ENCODE measurements at regions of chr1 and their contacts with region 1.

Region 1: GRCh38 chr1:88061492-88062177 is 622.4 kb upstream of the PKN2 start:
- DNase-seq: peak; percentile 64 to 80
- H3K4me3 ChIP-seq: no peak overlapping the region
- H3K27ac ChIP-seq: no peak overlapping the region
- H3K4me1 ChIP-seq: peaks cover 0 to 9% (median 4%) of the 10 kb centered on the region in 4 donors
- H3K27me3 ChIP-seq: no peaks in the 10 kb centered on the region
- CTCF ChIP-seq: peak; percentile 86 to 92

Region 2: DNA sequence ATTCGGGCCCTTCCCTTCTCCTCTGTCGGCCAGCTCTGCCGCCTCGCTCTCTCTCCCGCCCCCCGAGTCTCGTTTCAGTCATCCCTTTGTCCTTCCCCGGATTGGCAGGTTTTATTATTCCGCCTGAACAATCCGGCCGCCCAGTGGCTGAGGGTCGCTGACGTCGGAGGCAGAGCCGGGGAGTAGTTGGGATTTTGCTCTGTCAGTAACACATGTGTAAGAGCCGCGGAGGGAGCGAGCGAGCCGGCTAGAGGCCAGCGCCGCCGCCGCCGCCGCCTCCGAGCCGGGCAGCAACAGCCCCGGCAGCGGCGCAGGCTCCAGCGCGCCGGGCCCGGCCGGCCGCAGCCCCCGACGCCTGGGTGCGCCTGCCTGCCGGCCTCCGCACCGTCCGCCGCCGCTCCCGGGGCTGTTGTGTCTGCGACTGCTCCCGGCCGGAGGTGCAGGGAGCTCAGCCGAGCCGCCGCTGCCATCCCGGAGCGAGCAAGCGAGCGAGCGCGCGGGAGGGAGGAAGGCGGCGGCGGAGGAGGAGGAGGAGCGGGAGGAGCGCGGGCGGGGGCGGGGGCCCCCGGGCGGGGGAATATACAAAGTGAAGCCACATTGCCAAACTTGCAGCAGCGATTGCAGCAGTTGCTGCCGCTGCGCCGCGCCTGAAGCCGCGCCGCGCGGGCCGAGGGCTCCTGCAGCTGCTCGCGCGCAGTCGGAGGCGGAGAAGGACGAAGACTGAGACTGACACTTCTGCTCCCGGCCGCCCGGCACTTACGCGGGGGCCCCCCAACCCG is 733.2 kb before region 1 on chr1 and contains the start of gene LMO4:
- intact Hi-C with region 1: loop called (anchors 5 kb)
- DNase-seq: peak; percentile 98 to 99
- H3K4me3 ChIP-seq: peak within 1 kb of the TSS; percentile 65 to 79
- H3K27ac ChIP-seq: peak within 1 kb of the TSS; percentile 94 to 98
- H3K4me1 ChIP-seq: peaks cover 0 to 19% (median 12%) of the 10 kb centered on the region in 4 donors
- H3K27me3 ChIP-seq: no peaks in the 10 kb centered on the region
- CTCF ChIP-seq: peak in 1 of 2 experiments; percentile 24

Region 3: DNA sequence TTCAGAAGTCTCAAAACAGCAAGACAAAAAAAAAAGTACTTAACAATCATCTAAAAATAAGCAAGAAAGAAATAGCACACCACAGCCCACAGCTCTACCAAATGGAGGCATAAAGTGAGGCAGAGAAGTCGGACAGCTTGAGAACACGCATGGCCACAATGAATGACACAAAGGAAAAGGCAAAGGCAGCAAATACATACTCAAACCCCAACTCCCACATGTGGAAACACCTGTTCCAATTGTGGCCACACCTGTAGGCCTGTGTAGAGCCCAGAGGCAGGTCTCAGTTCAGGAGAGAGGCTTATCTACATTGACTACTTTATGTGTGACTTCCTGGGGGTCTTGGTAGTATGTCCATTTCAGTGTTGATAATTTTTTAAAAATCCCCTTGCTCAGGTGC is 189.4 kb before region 1 on chr1:
- intact Hi-C with region 1: no loop called
- DNase-seq: no peak
- H3K4me3 ChIP-seq: no peak overlapping the region
- H3K27ac ChIP-seq: no peak overlapping the region
- H3K4me1 ChIP-seq: peaks cover 0 to 9% (median 0%) of the 10 kb centered on the region in 4 donors
- H3K27me3 ChIP-seq: no peaks in the 10 kb centered on the region
- CTCF ChIP-seq: no peak

Region 4: DNA sequence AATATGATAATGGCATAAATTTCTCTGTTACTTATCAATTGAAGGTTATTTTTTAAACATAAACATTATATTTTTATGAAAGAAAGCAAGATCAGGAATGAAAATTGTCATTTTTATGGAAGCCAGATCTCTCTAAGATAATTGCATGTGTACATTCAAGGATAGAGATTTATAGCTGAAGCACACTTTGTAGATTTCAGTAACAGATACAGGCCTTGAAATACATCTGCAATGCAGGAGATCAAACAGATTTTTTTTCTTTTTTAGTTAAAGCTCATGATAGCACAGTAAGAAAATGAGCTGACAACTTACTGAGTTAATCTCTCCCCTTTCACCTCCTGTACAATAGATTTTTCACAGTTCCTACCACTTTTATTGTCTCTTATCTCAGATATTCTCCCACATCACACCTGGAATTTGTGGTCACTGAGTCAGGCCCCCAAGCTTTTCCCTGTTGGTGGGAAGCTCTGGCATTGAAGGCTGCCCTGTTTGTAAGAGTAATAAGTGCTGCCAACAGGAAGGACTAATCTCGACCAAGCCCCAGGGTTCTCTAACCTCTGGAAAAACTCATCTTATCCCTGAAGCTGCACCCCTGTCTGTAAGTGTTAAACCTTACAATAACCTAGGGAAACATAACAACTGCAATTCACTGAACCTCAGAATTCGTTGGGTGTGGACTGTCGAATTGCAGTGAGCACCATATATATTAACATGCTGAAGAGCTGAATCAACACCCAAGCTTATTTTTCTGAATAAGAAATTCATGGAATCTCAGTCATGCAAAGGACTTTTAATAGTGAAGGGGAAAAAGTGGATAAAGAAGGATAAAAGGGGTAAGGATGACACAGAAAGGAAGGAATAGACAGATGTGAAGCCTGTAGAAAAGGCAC is 134.0 kb before region 1 on chr1:
- intact Hi-C with region 1: no loop called
- DNase-seq: no peak
- H3K4me3 ChIP-seq: no peak overlapping the region
- H3K27ac ChIP-seq: no peak overlapping the region
- H3K4me1 ChIP-seq: peaks cover 0 to 25% (median 2%) of the 10 kb centered on the region in 4 donors
- H3K27me3 ChIP-seq: no peaks in the 10 kb centered on the region
- CTCF ChIP-seq: no peak

Region 5: GRCh38 chr1:88035578-88035977 is 26.1 kb before region 1 on chr1:
- intact Hi-C with region 1: no loop called
- DNase-seq: no peak
- H3K4me3 ChIP-seq: no peak overlapping the region
- H3K27ac ChIP-seq: no peak overlapping the region
- H3K4me1 ChIP-seq: no peaks in the 10 kb centered on the region
- H3K27me3 ChIP-seq: no peaks in the 10 kb centered on the region
- CTCF ChIP-seq: no peak